ENCODE measurements at regions of chr2 and their contacts with region 1.

Region 1: DNA sequence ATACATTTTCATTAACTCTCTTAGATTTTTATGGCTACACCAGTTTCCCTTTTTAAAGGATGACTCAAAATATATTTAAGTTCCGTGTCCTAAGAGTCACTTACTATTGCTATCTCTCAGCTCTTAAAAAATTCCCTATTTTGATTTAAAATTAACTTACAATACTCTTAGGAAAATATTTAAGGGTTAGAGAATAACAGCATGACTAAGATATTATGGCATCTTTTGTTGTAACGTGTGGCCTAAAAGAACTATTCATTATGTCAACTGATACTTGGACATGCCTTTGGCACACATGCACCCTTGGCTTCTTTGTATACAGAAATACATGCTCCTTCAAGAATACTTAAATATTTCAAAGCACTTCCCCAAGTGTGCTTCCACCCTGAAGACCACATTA is 42.3 kb downstream of the SCN3A start:
- DNase-seq: no peak
- H3K4me3 ChIP-seq: no peak overlapping the region
- H3K27ac ChIP-seq: no peak overlapping the region
- H3K4me1 ChIP-seq: no peaks in the 10 kb centered on the region
- H3K27me3 ChIP-seq: no peaks in the 10 kb centered on the region
- CTCF ChIP-seq: no peak
- POLR2A ChIP-seq: no peak

Region 2: GRCh38 chr2:165015052-165015642 is 146.4 kb before region 1 on chr2:
- intact Hi-C with region 1: no loop called
- DNase-seq: no peak
- H3K4me3 ChIP-seq: no peak overlapping the region
- H3K27ac ChIP-seq: no peak overlapping the region
- H3K4me1 ChIP-seq: peaks cover 0 to 16% (median 0%) of the 10 kb centered on the region in 3 donors
- H3K27me3 ChIP-seq: no peaks in the 10 kb centered on the region
- CTCF ChIP-seq: peak; percentile 63 to 84 (median 68)
- POLR2A ChIP-seq: no peak

Region 3: DNA sequence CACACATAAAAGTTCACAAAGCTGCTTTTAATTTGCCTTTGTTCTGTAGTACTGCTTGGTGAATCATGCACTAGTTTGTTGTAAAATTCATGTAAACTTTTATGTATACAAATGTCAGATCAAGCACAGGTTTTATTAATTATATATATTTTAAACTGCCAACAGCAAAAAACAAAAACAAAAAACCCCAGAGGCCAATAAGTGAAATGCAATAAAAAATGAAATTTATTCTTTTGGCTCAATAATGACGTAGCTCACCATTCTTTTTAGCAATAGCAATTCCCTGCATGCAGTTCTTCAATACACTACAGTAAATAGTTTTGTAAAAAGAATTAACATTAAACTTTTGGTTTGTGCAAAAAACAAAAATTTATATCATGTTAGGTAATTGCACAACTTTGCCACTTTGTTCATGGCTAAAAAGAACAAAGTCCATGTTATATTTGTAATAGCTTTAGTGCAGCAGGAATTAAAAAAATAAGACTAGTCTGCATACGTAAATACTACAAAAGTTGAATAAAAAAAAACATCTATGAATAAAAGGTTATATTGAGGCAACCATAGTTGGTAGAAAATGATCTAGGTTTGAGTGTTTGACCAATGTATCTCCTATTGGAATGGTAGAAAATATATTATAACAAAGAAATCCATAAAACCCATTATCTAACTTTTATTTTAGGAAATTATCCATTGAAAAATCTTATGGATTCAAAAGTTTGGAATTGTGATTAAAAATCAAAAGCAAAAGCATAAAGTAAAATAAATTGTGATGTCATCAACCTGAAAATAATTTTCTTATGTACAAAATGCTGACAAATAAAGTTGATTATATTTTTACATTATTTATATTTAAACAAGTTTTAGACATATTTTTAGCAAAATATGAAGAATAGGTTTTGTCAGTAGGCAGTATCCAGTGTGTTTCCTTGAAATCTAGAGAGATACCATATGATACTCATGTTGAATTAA is 73.3 kb before region 1 on chr2:
- intact Hi-C with region 1: loop called (anchors 10 kb)
- DNase-seq: no peak
- H3K4me3 ChIP-seq: no peak overlapping the region
- H3K27ac ChIP-seq: no peak overlapping the region
- H3K4me1 ChIP-seq: no peaks in the 10 kb centered on the region
- H3K27me3 ChIP-seq: no peaks in the 10 kb centered on the region
- CTCF ChIP-seq: no peak
- POLR2A ChIP-seq: no peak

Measured in esophagus squamous epithelium (tissue), 5 donors.